PC-3 (cell line): ENCODE measurements at regions of chr17 and their contacts with region 1.

Region 1: GRCh38 chr17:10844621-10845387 is 6.9 kb upstream of the PIRT start:
- DNase-seq: peak; percentile 61
- ATAC-seq: peak; percentile 88
- H3K4me3 ChIP-seq: peak overlapping the region; percentile 65
- H3K27ac ChIP-seq: no peak overlapping the region
- H3K4me1 ChIP-seq: no peaks in the 10 kb centered on the region
- H3K27me3 ChIP-seq: no peaks in the 10 kb centered on the region
- CTCF ChIP-seq: peak; percentile 77

Region 2: DNA sequence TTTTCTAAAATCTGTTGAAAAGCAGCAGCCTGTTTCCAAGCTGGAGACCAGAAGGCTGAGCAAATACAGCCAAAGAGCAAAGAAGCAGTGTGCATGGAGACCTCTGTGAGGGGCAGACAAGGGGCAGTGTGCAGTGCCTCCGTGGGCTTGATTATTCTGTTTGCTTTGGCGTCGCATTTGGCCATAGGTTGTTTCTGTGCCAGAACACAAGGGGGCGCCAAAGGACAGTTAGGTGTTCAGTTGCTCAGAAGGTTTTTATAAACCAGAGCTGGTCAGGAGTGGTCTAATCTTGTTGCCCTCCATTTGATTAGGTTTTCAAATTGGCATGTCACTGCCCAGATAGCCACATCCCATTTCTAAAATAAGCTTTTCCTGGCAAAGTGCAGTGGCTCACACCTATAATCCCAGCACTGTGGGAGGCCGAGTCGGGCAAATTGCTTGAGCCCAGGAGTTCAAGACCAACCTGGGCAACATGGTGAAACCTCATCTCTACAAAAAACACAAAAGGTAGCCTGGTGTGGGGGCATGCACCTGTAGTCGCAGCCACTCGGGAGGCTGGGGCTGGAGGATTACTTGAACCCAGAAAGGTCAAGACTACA is 198.3 kb before region 1 on chr17:
- CTCF ChIA-PET with region 1: interaction called, 3 read pairs
- POLR2A ChIA-PET with region 1: no interaction called
- intact Hi-C with region 1: loop called (anchors 1 kb)
- DNase-seq: peak; percentile 53
- ATAC-seq: peak; percentile 54
- H3K4me3 ChIP-seq: no peak overlapping the region
- H3K27ac ChIP-seq: no peak overlapping the region
- H3K4me1 ChIP-seq: no peaks in the 10 kb centered on the region
- H3K27me3 ChIP-seq: no peaks in the 10 kb centered on the region
- CTCF ChIP-seq: peak; percentile 71

Region 3: GRCh38 chr17:10737168-10737622 is 107.6 kb before region 1 on chr17:
- CTCF ChIA-PET with region 1: interaction called, 4 read pairs
- POLR2A ChIA-PET with region 1: no interaction called
- intact Hi-C with region 1: loop called (anchors 1 kb)
- DNase-seq: peak; percentile 56
- ATAC-seq: peak; percentile 67
- H3K4me3 ChIP-seq: no peak overlapping the region
- H3K27ac ChIP-seq: no peak overlapping the region
- H3K4me1 ChIP-seq: no peaks in the 10 kb centered on the region
- H3K27me3 ChIP-seq: no peaks in the 10 kb centered on the region
- CTCF ChIP-seq: peak; percentile 82

Region 4: DNA sequence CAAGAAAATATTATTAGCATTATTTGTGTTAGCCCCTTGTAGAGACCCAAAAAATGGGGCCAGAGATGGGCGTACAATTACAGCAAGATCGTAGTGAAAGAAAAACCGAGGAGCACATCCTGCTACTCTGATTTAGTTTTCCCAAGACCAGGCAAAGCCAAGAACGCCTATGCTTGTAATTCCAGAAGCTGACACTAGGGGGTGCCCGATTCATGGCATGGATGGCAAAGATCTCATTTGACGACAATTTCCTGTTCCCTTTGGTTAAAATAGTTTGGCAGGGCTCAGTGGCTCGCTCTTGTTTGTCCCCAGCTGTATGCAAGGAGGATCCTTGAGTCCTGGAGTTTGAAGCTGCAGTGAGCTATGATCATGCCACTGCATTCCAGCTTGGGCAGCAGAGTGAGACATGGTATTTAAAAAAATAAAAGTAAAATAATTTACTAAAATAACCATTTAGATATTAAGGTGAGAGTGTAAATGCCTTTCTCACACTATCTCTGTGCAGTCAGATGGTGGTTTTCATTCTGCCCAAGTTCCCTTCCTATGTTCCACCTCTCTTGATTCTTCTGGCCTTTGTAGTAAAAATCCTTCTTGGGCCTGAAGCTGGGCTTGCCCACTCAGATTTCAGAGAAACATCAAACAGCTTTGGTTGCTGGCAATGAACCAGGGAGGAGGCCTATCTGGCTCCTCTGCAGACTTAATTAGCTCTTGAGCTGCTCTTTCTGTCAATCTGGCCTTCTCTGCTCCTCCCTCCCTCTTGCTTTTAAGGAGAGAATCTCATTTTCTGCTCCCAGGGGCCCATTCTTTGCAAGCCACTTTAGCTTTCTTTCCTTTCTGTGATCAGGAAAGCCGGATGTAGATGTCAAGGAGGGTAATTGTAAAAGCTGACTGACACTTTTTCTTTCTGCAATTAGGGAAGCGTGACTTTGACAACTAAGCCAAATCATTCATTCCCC is 72.1 kb before region 1 on chr17:
- CTCF ChIA-PET with region 1: no interaction called
- POLR2A ChIA-PET with region 1: no interaction called
- intact Hi-C with region 1: loop called (anchors 1 kb)
- DNase-seq: peak; percentile 83
- ATAC-seq: peak; percentile 20; the same call in 1 of the 2 replicates
- H3K4me3 ChIP-seq: no peak overlapping the region
- H3K27ac ChIP-seq: no peak overlapping the region
- H3K4me1 ChIP-seq: no peaks in the 10 kb centered on the region
- H3K27me3 ChIP-seq: no peaks in the 10 kb centered on the region
- CTCF ChIP-seq: peak; percentile 80